ENCODE measurements at regions of chr2 and their contacts with region 1.

Region 1: GRCh38 chr2:161586517-161587167 is 37.6 kb upstream of the SLC4A10 start:
- ATAC-seq: peak in 3 of 8 experiments; percentile 32 to 38 (median 32)
- H3K4me3 ChIP-seq: no peak overlapping the region
- H3K27ac ChIP-seq: no peak overlapping the region
- H3K4me1 ChIP-seq: no peaks in the 10 kb centered on the region

Region 2: DNA sequence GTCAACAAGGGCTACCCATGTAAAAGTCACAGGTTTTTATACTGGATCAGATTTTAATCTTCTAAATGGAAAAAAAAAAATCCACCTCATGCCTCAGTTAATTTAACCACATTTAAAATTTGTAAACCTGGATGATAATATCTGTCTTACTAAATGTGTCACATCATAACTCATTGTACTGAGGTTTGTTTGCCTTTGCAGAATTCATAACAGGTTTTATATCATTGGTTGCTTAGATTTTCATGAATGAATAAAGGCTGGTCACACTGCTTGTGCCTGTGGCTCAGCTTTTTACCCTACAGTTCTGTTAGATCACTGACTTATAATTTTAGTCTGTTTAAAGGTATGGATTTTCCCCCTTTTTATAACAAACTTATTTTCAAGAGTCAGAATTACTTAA is 229.5 kb before region 1 on chr2:
- in situ Hi-C with region 1: no loop called
- ATAC-seq: peak in 2 of 8 experiments; percentile 32 to 91
- H3K4me3 ChIP-seq: no peak overlapping the region
- H3K27ac ChIP-seq: no peak overlapping the region
- H3K4me1 ChIP-seq: peaks cover 2 to 8% of the 10 kb centered on the region in 2 donors

Region 3: GRCh38 chr2:161938339-161938738 is 351.7 kb after region 1 on chr2:
- in situ Hi-C with region 1: loop called in 5 of 9 experiments (anchors 10 to 25 kb)
- ATAC-seq: no peak
- H3K4me3 ChIP-seq: no peak overlapping the region
- H3K27ac ChIP-seq: no peak overlapping the region
- H3K4me1 ChIP-seq: no peaks in the 10 kb centered on the region

Region 4: DNA sequence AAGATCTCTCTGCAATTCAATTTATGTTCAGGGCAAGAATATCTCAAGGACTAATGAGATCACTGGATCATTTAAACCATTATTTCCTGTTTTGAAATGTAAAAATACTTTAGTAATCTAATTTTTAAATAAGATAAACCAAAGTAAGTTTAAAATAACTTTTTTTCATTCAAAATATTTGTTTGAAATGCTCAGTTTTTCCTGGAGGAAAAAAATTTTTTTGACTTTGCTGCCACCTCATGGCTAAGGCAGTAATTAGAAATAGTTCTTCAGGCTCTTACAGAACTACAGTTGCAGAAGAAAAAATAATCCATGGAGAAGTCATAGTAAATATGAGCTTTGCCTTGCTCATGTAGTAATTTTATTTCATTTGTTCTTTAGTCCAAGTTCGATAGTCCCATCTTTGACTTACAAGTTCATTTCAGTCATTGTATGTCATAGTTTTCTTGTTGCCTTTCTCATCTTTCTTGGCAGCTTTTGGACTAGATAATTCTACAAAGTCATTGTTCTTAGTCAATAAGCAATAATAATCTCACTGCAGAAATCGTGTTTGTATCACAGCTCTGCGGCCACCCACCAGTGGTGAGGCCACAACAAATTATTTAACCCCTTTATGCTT is 360.0 kb after region 1 on chr2:
- in situ Hi-C with region 1: loop called in 5 of 9 experiments (anchors 5 to 25 kb)
- ATAC-seq: peak in 3 of 8 experiments; percentile 17 to 44 (median 38)
- H3K4me3 ChIP-seq: no peak overlapping the region
- H3K27ac ChIP-seq: no peak overlapping the region
- H3K4me1 ChIP-seq: peaks cover 0 to 27% of the 10 kb centered on the region in 2 donors

Region 5: DNA sequence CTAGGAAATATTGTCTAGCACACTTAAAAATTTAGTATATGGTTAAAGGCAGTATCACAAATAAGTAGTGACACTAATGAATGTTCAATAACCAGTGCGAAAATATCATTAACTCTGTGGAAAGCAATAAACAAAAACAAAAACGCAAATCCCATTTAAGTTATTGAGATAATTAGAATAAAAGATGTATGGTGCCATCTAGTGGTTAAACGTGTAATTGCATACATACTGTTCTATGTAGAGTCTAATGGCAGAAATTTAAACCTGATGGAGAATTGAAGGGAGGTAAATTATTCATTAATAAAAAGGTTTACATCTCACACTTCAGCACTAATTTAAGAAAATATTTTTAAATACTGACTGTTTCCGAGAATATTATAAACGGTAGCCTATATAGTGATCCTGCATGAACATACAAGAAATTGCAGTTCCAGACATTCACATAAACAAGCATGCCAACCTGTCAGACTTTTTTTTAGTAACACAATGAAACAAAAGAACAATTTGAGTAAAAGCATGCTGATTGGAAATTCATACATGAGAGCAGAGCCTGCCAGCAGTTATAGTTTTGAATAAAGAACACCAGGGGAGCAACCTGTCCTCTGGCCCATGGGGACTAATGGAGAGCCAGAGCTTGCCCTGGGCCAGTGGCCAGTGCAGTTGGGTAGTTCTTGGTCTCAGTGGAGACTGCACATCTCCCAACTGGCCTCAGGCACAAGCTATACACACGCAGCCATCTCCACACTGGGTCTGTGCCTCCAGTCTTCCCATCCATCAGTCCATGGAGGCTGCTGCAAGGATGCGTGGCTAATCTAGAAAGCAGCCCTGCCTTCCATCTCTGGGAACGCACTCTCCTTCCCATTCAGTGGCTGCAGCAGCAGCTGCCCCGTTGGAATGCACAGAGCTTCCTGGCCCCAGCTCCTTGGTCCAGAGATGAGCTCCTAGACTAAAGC is 537.4 kb after region 1 on chr2:
- in situ Hi-C with region 1: loop called in 4 of 9 experiments (anchors 10 to 25 kb)
- ATAC-seq: peak in 3 of 8 experiments; percentile 29 to 41 (median 36)
- H3K4me3 ChIP-seq: no peak overlapping the region
- H3K27ac ChIP-seq: no peak overlapping the region
- H3K4me1 ChIP-seq: peaks cover 0 to 14% of the 10 kb centered on the region in 2 donors